Left ventricle myocardium inferior (tissue), 1 donor: ENCODE measurements at regions of chr13 and their contacts with region 1.

Region 1: DNA sequence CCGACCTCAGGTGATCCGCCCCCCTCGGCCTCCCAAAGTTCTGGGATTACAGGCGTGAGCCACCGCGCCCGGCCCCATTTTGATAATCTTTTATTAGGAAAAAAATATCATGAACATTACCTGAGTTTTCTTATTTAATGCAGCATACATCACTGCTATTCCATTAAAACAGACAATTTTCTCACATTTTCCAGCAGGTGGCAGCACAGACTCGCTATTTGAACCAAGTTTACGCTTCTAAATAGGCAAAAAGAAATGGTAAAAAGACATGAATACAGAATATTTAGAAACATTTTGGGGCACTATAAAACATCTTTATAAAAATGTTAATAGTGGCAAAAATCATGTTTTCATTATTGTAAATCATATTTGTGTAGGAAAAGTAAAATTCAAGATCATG is 903.1 kb downstream of the SLITRK6 start:
- DNase-seq: no peak
- H3K4me3 ChIP-seq: no peak overlapping the region
- H3K27ac ChIP-seq: no peak overlapping the region
- H3K4me1 ChIP-seq: no peaks in the 10 kb centered on the region
- H3K27me3 ChIP-seq: no peaks in the 10 kb centered on the region
- CTCF ChIP-seq: peak; percentile 68

Region 2: DNA sequence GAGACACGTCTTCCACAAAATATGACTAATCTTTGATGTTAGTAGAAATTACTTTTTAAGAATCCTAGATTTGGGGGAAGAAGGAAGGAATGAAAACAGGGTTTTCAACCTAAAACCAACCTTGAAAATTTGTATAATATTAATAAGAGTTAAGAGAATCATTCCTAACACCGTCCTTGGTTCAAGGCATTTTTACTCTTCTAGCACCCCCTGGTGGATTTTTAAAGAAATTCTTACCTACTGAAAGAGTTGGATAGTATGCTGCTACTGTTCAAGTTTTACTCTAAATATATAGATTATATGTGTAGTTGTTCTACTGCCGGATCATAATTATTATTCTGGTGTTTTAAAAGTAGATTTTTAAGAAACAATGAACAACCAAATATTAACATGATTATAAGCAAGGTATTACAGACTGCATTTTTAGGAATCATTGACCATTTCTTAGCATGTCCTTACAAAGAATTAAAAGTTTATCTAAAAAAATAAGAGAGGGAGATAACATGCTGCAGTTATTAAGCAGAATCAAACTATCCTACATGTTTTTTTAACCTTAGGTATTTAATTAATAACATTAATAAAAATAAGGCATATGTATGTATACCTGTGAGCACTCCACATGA is 910.5 kb after region 1 on chr13:
- intact Hi-C with region 1: loop called (anchors 5 kb)
- DNase-seq: no peak
- H3K4me3 ChIP-seq: no peak overlapping the region
- H3K27ac ChIP-seq: no peak overlapping the region
- H3K4me1 ChIP-seq: no peaks in the 10 kb centered on the region
- H3K27me3 ChIP-seq: no peaks in the 10 kb centered on the region
- CTCF ChIP-seq: peak; percentile 67

Region 3: DNA sequence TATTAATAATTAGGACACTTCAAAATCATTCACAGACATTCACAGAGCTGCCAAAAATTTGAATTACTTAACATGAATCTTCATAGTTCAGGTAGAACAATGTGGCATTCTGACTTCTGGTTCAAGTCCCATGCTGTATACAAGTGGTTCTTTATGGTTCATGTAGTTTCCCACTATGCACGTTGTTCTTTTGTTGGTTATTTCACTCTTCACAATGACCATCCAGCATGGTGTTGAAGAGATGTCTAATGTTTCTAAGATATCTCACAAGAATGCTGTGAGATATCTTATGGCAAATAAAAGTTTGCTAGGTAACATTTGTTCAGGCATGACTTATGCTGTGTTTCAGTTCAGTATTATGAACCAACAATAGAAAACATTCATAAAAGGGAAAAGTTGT is 991.3 kb after region 1 on chr13:
- intact Hi-C with region 1: no loop called
- DNase-seq: no peak
- H3K4me3 ChIP-seq: no peak overlapping the region
- H3K27ac ChIP-seq: no peak overlapping the region
- H3K4me1 ChIP-seq: no peaks in the 10 kb centered on the region
- H3K27me3 ChIP-seq: no peaks in the 10 kb centered on the region
- CTCF ChIP-seq: no peak